ENCODE measurements at regions of chr4 and their contacts with region 1.

Region 1: GRCh38 chr4:158560284-158560683 is 38.6 kb downstream of the RXFP1 start:
- DNase-seq: no peak
- H3K4me3 ChIP-seq: no peak overlapping the region
- H3K27ac ChIP-seq: no peak overlapping the region
- H3K4me1 ChIP-seq: no peaks in the 10 kb centered on the region
- H3K27me3 ChIP-seq: no peaks in the 10 kb centered on the region
- CTCF ChIP-seq: no peak

Region 2: DNA sequence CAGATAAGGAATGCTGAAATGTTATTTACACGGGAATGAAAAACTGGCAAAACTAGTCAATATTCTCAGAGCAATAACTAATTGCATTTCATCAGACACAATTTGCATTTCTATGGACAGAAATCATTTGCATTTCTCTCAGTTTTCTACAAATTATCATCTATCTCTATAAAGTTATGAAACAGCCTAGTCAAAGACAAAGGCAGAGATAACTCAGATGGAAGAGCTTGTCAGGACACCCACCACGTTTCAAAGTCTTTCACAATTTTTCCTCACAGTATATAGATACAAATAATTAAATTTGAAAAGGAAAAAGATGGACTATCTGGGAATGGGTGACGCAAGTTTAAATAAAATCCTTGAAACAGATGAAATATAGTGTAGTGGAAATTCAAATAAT is 618.3 kb before region 1 on chr4:
- CTCF ChIA-PET with region 1: no interaction called
- POLR2A ChIA-PET with region 1: no interaction called
- intact Hi-C with region 1: no loop called
- DNase-seq: no peak
- H3K4me3 ChIP-seq: no peak overlapping the region
- H3K27ac ChIP-seq: no peak overlapping the region
- H3K4me1 ChIP-seq: no peaks in the 10 kb centered on the region
- H3K27me3 ChIP-seq: no peaks in the 10 kb centered on the region
- CTCF ChIP-seq: no peak

Region 3: GRCh38 chr4:158065176-158065575 is 495.1 kb before region 1 on chr4:
- CTCF ChIA-PET with region 1: no interaction called
- POLR2A ChIA-PET with region 1: interaction called, 10 read pairs
- intact Hi-C with region 1: no loop called
- DNase-seq: no peak
- H3K4me3 ChIP-seq: no peak overlapping the region
- H3K27ac ChIP-seq: no peak overlapping the region
- H3K4me1 ChIP-seq: no peaks in the 10 kb centered on the region
- H3K27me3 ChIP-seq: no peaks in the 10 kb centered on the region
- CTCF ChIP-seq: no peak

Measured in PC-9 (cell line).